Endothelial cell of umbilical vein (primary cell): ENCODE measurements at regions of chr20 and their contacts with region 1.

Region 1: DNA sequence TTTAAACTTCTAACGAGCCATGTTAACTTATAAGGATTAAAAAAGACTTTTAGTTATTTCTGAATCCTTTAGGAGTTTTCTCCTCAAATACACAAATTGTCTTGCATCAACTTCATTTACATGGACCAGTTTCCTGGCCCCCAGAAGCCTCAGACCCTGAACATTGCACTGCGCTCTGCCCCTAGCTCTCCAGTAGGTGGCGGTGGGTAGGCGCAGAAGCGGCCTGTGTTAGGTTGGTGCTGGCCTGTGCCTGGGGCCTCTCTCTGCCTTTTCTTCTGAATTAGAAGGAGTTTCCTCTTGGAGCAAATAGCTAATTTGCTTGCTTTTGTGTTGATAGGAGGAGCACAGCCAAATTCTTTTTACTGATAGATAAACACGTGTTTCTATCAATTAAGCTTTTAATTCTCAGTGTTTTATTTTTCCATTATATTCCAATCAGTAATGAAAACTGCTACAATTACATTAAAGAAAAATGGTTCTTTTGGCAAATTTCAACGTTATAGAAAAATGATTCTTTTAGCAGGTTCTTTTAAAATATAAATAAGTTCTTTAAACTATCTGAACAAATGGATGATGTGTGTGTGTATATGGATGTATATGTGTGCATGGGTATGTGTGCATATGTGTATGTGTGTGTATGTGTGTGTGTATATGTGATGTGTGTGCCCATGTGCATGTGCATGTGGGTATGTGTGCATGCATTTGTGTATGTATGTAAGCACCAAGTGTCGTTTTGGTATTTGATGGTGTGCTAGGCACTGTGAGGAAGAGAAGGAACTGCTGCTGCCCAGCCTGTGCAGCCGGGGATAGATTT is 44.5 kb downstream of the DTD1 start:
- DNase-seq: peak; percentile 49
- H3K4me3 ChIP-seq: no peak overlapping the region
- H3K27ac ChIP-seq: no peak overlapping the region
- H3K4me1 ChIP-seq: no peaks in the 10 kb centered on the region
- H3K27me3 ChIP-seq: no peaks in the 10 kb centered on the region
- CTCF ChIP-seq: peak; percentile 93 to 95
- POLR2A ChIP-seq: no peak

Region 2: DNA sequence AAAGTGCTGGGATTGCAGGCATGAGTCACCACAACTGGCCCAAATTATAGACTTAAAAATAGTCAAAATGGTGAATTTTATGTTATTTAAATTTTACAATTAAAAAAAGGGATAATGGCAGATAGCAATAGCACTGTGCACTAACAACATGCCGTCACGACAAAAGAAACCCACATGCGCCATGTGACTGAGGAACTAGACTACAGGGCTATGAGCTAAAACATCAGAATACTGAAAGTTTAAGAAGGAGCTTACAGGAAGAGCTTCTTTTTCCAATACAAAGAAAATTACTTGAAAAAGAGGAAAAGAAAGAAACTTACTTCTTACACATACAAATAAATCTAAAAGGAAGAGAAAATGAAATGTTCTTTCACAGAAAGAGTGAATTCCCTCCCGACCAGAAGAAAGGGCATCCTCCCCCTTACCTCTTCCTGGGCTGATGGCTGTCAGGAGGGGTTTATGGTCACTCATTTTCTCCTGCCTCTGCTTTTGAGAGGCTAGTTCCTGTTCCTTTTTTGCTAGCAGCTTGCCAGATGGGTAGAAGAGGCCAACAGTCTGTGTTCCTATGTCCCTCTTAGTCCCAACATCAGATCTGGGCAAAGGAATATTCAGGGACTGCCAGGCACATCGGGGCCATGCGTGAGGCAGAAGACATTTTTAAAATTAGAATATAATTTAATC is 220.0 kb before region 1 on chr20:
- CTCF ChIA-PET with region 1: interaction called, 3 read pairs
- POLR2A ChIA-PET with region 1: no interaction called
- dilution Hi-C with region 1: no loop called
- intact Hi-C with region 1: loop called (anchors 5 kb)
- DNase-seq: no peak
- H3K4me3 ChIP-seq: no peak overlapping the region
- H3K27ac ChIP-seq: no peak overlapping the region
- H3K4me1 ChIP-seq: no peaks in the 10 kb centered on the region
- H3K27me3 ChIP-seq: no peaks in the 10 kb centered on the region
- CTCF ChIP-seq: no peak
- POLR2A ChIP-seq: no peak

Region 3: DNA sequence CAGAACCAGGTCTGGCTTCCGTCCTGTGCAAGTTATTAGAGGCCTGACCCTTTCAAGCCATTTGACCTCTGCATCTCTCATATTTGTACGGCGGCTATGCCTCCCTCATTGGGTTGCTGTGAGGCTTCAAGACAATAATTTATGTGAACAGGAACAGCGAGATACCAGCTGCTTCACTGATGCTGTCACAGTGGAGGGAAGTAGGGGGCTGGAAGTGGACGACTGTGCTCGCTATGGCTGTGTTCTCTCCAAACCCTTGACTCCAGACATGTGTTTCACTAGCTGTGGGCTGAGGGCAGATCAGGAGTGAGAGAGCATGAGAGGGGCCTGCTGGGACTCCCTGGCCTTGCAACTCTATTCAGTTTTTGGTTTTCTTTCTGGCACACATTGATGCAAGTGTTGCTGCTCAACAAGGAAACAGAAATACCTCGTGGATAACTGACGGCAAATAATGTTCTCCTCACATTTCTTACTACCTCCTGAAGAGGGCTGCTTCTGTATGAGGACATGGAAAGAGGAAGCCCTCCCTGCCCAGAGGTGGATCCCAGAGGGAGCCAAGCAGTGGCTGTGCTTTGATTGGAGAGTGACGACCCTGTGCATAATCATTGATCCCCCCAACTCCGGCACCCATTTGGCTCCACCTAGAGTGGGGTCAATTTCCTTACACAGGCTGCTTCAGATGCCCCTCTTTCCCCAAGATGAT is 146.4 kb after region 1 on chr20:
- CTCF ChIA-PET with region 1: no interaction called
- POLR2A ChIA-PET with region 1: no interaction called
- dilution Hi-C with region 1: no loop called
- intact Hi-C with region 1: no loop called
- DNase-seq: no peak
- H3K4me3 ChIP-seq: no peak overlapping the region
- H3K27ac ChIP-seq: no peak overlapping the region
- H3K4me1 ChIP-seq: no peaks in the 10 kb centered on the region
- H3K27me3 ChIP-seq: peaks cover 0 to 2% of the 10 kb centered on the region in 2 experiments
- CTCF ChIP-seq: no peak
- POLR2A ChIP-seq: no peak

Region 4: GRCh38 chr20:18793625-18794427 is 161.4 kb after region 1 on chr20:
- CTCF ChIA-PET with region 1: interaction called, 3 read pairs
- POLR2A ChIA-PET with region 1: no interaction called
- dilution Hi-C with region 1: no loop called
- intact Hi-C with region 1: loop called (anchors 2 kb)
- DNase-seq: peak; percentile 90
- H3K4me3 ChIP-seq: peak overlapping the region; percentile 71 to 97 (median 80)
- H3K27ac ChIP-seq: peak overlapping the region; percentile 52
- H3K4me1 ChIP-seq: peaks cover 5% of the 10 kb centered on the region
- H3K27me3 ChIP-seq: peaks cover 0 to 2% of the 10 kb centered on the region in 2 experiments
- CTCF ChIP-seq: no peak
- POLR2A ChIP-seq: peak; percentile 80

Region 5: DNA sequence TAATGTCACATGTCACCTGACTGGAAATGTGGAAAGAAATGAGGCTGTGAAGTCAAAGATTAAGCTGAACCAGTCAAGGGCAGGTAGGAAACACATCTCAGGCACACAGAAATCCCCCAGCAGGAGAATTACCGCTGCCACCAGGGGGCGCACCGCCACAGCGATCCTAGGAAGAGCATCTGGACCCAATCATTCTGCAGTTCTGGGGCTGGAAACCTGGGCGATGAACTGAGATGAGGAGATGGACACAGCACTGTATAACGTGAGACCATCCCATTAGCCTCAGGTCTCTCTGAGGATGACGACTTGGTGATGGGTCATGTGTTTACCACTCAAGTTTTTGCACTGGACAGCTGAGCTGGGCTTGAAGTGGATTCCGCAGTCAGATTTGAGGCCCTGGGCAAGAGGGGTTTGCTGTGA is 573.6 kb after region 1 on chr20:
- CTCF ChIA-PET with region 1: interaction called, 13 read pairs
- POLR2A ChIA-PET with region 1: no interaction called
- dilution Hi-C with region 1: no loop called
- intact Hi-C with region 1: loop called (anchors 10 kb)
- DNase-seq: peak; percentile 43
- H3K4me3 ChIP-seq: no peak overlapping the region
- H3K27ac ChIP-seq: no peak overlapping the region
- H3K4me1 ChIP-seq: no peaks in the 10 kb centered on the region
- H3K27me3 ChIP-seq: peaks cover under 1 to 2% of the 10 kb centered on the region in 2 experiments
- CTCF ChIP-seq: peak; percentile 84 to 88
- POLR2A ChIP-seq: no peak

Region 6: GRCh38 chr20:19583532-19584175 is 951.3 kb after region 1 on chr20:
- CTCF ChIA-PET with region 1: interaction called, 30 read pairs
- POLR2A ChIA-PET with region 1: no interaction called
- dilution Hi-C with region 1: no loop called
- intact Hi-C with region 1: loop called (anchors 1 kb)
- DNase-seq: peak; percentile 43
- H3K4me3 ChIP-seq: no peak overlapping the region
- H3K27ac ChIP-seq: no peak overlapping the region
- H3K4me1 ChIP-seq: no peaks in the 10 kb centered on the region
- H3K27me3 ChIP-seq: no peaks in the 10 kb centered on the region
- CTCF ChIP-seq: peak; percentile 71 to 74
- POLR2A ChIP-seq: no peak